Testis (tissue), 5 donors: ENCODE measurements at regions of chr12 and their contacts with region 1.

Region 1: GRCh38 chr12:49288412-49288853 is 6.5 kb upstream of the PRPH start:
- DNase-seq: peak; percentile 79
- H3K4me3 ChIP-seq: no peak overlapping the region
- H3K27ac ChIP-seq: no peak overlapping the region
- H3K4me1 ChIP-seq: no peaks in the 10 kb centered on the region
- H3K27me3 ChIP-seq: no peaks in the 10 kb centered on the region
- CTCF ChIP-seq: peak; percentile 65 to 86 (median 86)
- POLR2A ChIP-seq: no peak

Region 2: DNA sequence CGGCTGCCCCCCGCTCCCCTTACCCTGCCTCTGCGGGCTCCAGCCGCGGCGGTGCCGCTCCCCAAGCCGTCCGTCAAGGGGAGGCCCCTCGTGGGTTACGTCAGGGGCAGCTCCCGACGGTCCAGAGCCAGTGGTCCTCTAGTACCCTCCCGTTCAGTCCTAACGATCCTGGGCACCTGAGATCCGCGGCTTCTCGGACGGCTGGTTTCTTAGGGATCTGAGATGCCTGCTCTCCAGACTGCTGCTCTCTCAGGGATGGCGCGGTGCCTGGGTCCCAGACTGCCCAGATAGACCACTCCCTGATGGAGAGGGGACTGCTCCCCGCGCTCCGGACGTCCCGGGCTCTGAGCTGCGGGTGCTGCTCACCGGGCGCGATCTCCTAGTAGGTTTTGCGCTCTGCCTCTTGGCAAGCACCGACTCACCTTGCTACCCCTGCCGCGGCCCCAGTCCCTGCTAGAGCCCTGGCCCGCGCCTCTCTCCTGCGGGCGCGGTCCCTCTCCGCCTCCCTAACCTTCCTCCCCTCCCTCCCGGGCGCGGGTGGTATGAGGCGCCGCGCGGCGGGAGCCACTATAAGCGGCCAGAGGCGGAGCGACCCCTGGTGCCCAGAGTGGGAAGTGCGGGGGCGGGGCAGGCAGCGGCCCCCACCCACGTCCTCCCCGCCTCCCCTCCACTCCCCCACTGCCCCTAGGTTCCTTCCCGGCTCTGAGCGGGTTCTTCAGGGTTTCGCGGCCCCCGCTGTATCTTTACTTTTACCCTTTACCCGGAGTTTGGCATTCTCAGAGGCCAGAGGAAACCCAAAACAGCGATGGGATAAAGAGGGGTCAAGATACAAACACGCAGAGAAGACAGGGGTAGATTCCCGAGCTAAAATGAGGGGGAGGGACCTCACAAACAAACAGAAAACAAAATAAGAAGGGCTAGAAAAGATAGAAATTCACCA is 48.5 kb after region 1 on chr12 and contains the start of gene C1QL4:
- intact Hi-C with region 1: loop called (anchors 10 kb)
- DNase-seq: peak; percentile 89
- H3K4me3 ChIP-seq: peak within 1 kb of the TSS; percentile 34 to 42
- H3K27ac ChIP-seq: no peak within 1 kb of the TSS
- H3K4me1 ChIP-seq: peaks cover 1% of the 10 kb centered on the region
- H3K27me3 ChIP-seq: peaks cover 3% of the 10 kb centered on the region
- CTCF ChIP-seq: peak; percentile 38 to 96 (median 80)
- POLR2A ChIP-seq: no peak
- total RNA-seq, gene C1QL4: 3.3 to 5.5 TPM